ENCODE measurements at regions of chr5 and their contacts with region 1.

Region 1: DNA sequence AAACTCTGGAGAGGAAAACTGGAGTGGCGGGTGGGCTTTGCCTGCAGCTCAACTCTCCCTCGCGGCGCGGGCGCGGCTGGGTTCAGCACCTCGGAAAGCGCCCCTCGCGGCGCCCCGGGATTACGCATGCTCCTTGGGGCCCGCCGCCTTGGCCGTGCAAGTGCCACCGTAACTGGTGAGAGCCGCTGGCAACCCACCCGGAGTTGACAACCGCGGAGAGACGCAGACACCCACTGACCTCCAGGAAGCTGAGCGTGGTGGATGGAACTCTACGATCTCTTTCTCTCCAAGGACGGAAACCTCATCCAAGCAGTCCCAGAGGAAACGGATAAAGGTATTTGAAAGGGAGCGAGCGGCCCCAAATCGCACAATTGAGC is 194 bp upstream of the RXFP3 start:
- DNase-seq: peak; percentile 21
- H3K4me3 Mint-ChIP-seq: no peak overlapping the region
- H3K27ac Mint-ChIP-seq: no peak overlapping the region
- H3K4me1 Mint-ChIP-seq: no peaks in the 10 kb centered on the region
- H3K27me3 Mint-ChIP-seq: peaks cover 48% of the 10 kb centered on the region

Region 2: DNA sequence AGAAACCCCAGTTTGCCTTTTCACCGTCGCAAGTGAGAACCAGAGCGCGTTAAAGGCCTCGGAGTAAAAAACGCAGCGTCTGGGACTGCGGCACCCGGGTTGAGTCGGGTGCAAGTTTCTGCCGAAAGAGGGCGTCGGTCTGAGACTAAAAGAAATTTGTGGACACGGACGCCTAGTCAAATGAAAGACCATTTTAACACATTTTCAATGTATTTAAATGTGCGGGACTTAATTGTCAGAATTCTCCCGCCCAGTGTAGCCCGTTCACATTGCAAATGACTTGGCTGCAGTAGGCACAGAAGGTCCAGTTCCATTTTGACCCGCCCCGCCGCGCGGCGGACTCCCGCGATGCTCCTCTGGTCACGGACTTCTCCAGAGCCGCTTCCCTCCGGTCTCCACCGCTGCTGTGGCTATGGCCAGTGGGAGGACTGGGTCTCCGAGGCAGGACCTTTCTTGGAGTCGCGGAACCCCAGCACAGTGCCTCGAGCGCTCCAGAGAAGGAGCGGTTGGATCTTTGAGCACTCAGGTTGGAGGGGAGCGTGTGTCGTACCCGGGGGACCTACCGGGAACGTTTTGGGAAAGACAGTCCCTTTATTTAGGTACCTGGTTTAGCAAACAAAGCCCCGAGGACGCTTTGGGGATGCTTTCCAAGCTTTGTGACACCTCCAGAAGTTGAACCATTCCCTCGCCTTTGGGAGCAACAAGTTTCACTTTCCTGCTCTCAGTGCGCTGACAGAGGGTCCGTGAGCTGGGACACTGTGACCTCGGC is 1226.0 kb before region 1 on chr5:
- intact Hi-C with region 1: loop called (anchors 2 kb)
- DNase-seq: peak; percentile 41
- H3K4me3 Mint-ChIP-seq: peak overlapping the region; percentile 79
- H3K27ac Mint-ChIP-seq: peak overlapping the region; percentile 80
- H3K4me1 Mint-ChIP-seq: peaks cover 30% of the 10 kb centered on the region
- H3K27me3 Mint-ChIP-seq: peaks cover 61% of the 10 kb centered on the region

Region 3: GRCh38 chr5:33588654-33589372 is 347.2 kb before region 1 on chr5:
- intact Hi-C with region 1: loop called (anchors 1 kb)
- DNase-seq: peak; percentile 13
- H3K4me3 Mint-ChIP-seq: no peak overlapping the region
- H3K27ac Mint-ChIP-seq: no peak overlapping the region
- H3K4me1 Mint-ChIP-seq: no peaks in the 10 kb centered on the region
- H3K27me3 Mint-ChIP-seq: peaks cover 3% of the 10 kb centered on the region

Region 4: DNA sequence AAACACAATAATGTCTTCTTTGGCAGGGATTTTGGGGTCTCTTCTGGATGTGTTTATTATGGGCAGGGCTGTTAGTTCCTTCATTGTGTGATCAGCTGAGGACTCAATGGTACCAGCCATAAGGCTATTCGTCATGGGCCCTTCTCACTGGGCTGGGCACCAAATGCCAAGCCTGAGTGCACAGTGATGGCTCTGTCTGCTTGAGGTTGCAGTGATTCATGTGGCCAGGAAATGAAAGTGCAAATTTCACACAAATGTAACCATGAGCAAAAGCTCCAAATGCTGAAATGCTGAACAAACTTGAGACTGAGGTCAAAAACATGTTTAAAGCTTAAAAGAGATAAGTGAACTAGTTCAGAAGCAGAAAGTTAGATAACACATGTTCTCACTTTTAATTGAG is 304.2 kb before region 1 on chr5:
- intact Hi-C with region 1: no loop called
- DNase-seq: no peak
- H3K4me3 Mint-ChIP-seq: no peak overlapping the region
- H3K27ac Mint-ChIP-seq: no peak overlapping the region
- H3K4me1 Mint-ChIP-seq: no peaks in the 10 kb centered on the region
- H3K27me3 Mint-ChIP-seq: no peaks in the 10 kb centered on the region

Region 5: DNA sequence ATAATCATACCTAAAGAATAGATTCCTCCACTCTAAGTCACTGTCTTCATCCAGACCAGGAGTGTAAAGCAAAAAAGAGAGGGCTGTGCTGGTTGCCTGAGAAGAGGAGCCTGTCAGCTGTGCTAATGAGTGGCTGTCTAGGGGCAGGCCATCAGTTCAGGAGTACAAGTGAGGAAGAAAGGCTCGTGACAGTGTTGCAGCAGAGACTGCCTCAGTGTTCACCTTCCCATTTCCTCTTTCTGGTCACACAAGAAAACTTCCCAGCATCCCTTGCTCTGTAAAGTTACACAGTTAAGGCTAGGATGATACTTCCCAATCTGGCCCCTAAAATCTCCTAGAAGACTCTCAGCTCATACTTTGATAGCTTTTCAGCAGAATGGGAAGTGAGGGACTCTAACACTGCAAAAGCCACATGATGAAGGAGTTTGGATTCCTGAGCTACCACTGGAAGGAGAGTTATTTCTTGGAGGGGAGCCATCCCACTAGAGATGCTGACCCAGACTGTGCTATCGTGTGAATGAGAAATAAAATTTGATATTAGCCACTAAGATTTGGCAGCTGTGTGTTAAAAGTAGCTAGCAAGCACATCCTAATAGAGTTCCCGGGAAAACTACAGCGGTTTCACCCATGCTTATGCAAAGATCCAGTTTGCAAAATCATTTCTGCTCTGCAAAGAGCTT is 111.3 kb before region 1 on chr5:
- intact Hi-C with region 1: loop called (anchors 10 kb)
- DNase-seq: no peak
- H3K4me3 Mint-ChIP-seq: no peak overlapping the region
- H3K27ac Mint-ChIP-seq: no peak overlapping the region
- H3K4me1 Mint-ChIP-seq: no peaks in the 10 kb centered on the region
- H3K27me3 Mint-ChIP-seq: peaks cover 2% of the 10 kb centered on the region

Measured in activated T-helper 1 cell treated with anti-CD3 and anti-CD28 coated beads, Interleukin-12 subunit alpha, Interleukin-12 subunit beta, Interleukin-2, Interleukin-4 antibody, amounts not matched to agents 30 ng/mL and 10 ng/mL and 1 ng/mL, durations not matched to agents 14 hours and 24 hours and 36 hours (primary cell).